CD4-positive, alpha-beta memory T cell (primary cell): ENCODE measurements at regions of chrX and their contacts with region 1.

Region 1: GRCh38 chrX:48539345-48540027 is at the start of gene TBC1D25:
- DNase-seq: peak; percentile 92 to 99 (median 97)
- H3K4me3 ChIP-seq: peak within 1 kb of the TSS; percentile 23 to 70
- H3K4me3 Mint-ChIP-seq: peak within 1 kb of the TSS; percentile 83 to 92 (median 88)
- H3K27ac ChIP-seq: peak within 1 kb of the TSS; percentile 95
- H3K27ac Mint-ChIP-seq: peak within 1 kb of the TSS; percentile 91 to 99 (median 96)
- H3K4me1 ChIP-seq: peaks cover 20% of the 10 kb centered on the region
- H3K4me1 Mint-ChIP-seq: peaks cover 13 to 24% (median 17%) of the 10 kb centered on the region in 4 donors
- H3K27me3 ChIP-seq: no peaks in the 10 kb centered on the region
- H3K27me3 Mint-ChIP-seq: no peaks in the 10 kb centered on the region
- total RNA-seq, gene TBC1D25: 22.8 to 24.5 TPM

Region 2: GRCh38 chrX:48083212-48083611 is 456.3 kb before region 1 on chrX:
- CTCF ChIA-PET with region 1: interaction called, 17 read pairs
- POLR2A ChIA-PET with region 1: interaction called, 9 read pairs
- intact Hi-C with region 1: loop called (anchors 1 kb)
- DNase-seq: peak in 4 of 5 donors; percentile 38 to 49 (median 40)
- H3K4me3 ChIP-seq: no peak overlapping the region
- H3K4me3 Mint-ChIP-seq: no peak overlapping the region
- H3K27ac ChIP-seq: no peak overlapping the region
- H3K27ac Mint-ChIP-seq: no peak overlapping the region
- H3K4me1 ChIP-seq: no peaks in the 10 kb centered on the region
- H3K4me1 Mint-ChIP-seq: no peaks in the 10 kb centered on the region
- H3K27me3 ChIP-seq: no peaks in the 10 kb centered on the region
- H3K27me3 Mint-ChIP-seq: no peaks in the 10 kb centered on the region

Region 3: DNA sequence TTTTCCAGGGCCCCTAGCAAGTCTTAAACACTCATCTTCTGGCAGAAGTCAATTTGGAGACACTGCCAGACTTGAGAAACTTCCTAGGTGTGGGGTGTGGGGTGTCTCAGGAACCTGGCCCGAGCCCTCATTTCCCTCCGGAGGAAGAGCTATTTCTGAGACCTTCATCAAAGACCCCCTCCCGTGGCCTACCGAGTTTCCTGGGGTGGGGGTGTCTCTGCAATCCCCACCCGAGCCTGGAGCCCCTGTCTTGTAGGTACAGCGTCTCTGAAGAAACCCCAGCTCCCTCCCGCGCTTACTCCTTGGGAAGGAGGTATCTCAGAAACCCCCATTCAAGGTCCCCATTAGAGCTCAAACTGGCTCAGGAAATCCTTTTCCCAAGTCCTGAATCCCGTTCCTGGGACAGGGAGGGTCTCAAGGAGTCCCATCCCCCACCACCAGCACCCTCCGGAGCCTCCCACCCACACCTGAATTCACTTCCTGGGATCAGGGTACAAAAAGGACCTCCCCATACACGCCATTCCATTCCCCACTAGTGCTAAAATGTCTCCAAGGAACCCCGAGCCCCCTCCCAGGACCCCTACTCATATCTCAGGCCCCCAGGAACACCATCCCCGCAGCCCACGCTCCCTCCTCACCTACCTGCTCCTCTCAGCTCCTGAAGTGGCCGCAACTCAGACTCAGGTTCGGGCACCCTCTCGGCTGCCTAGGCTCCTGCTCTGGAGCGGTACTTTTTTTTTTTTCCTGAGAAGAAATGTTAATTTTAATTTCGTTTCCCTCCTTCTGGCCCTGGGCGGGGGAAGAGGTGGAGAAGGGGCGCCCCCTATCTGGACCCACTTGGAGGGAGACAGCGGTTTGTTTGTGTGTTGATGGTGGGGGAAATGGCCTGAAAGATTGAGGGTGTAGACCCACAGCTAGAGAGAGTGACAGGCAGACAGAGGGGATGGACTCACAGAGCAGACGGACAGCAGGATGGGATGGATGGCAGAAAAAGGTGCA is 70.5 kb before region 1 on chrX:
- CTCF ChIA-PET with region 1: interaction called, 6 read pairs
- POLR2A ChIA-PET with region 1: interaction called, 20 read pairs
- intact Hi-C with region 1: no loop called
- DNase-seq: peak in 4 of 5 donors; percentile 27 to 42 (median 32)
- H3K4me3 ChIP-seq: peak overlapping the region; percentile 57 to 58
- H3K4me3 Mint-ChIP-seq: peak overlapping the region; percentile 82 to 95 (median 90)
- H3K27ac ChIP-seq: peak overlapping the region; percentile 72
- H3K27ac Mint-ChIP-seq: peak overlapping the region; percentile 62 to 95 (median 88)
- H3K4me1 ChIP-seq: peaks cover 12% of the 10 kb centered on the region
- H3K4me1 Mint-ChIP-seq: peaks cover 8 to 39% (median 22%) of the 10 kb centered on the region in 4 donors
- H3K27me3 ChIP-seq: no peaks in the 10 kb centered on the region
- H3K27me3 Mint-ChIP-seq: no peaks in the 10 kb centered on the region

Region 4: DNA sequence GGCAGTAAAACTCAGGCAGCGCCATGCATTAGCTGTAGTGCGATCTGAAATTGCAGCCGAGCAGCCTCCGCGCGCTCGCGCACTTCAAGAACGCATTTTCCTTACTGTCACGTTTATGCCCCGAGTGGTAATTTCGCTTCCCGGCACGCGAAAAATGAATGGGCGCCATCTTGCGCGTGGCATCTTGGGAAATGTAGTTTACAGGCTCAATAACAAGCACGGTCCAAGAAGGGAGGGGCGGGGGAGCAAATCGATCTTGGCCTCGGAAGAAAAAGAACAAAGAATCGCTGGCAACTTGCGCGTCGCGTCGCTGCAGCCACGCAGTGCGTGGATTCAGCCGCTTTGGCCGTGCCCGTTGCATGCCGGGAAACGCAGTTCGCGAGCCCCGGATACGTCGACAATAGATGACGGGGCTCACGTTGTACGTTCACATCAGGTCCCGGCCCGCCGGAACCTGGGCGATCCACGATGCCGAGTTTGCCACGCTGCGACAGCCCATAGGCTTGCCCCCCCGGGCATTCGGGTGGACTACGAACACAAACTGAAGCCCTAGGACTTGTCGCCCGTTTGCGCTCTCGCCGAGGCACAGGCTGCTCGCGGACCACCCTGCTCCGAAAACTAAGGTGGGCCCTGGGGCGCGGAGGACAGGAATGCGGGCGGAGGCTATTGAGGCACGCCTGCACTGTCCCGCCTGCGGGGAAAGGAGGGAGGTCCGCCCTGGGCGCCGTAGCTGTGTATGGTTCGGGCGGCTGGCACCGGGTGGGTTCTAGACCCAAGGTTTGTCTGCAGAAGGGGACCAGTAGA is 63.5 kb before region 1 on chrX and contains the start of gene FTSJ1:
- CTCF ChIA-PET with region 1: interaction called, 3 read pairs
- POLR2A ChIA-PET with region 1: interaction called, 20 read pairs
- intact Hi-C with region 1: loop called (anchors 1 kb)
- DNase-seq: peak; percentile 87 to 96 (median 92)
- H3K4me3 ChIP-seq: peak within 1 kb of the TSS; percentile 57 to 79
- H3K4me3 Mint-ChIP-seq: peak within 1 kb of the TSS; percentile 79 to 92 (median 90)
- H3K27ac ChIP-seq: peak within 1 kb of the TSS; percentile 80
- H3K27ac Mint-ChIP-seq: peak within 1 kb of the TSS; percentile 78 to 95 (median 92)
- H3K4me1 ChIP-seq: peaks cover 24% of the 10 kb centered on the region
- H3K4me1 Mint-ChIP-seq: peaks cover 16 to 24% (median 22%) of the 10 kb centered on the region in 4 donors
- H3K27me3 ChIP-seq: no peaks in the 10 kb centered on the region
- H3K27me3 Mint-ChIP-seq: no peaks in the 10 kb centered on the region
- total RNA-seq, gene FTSJ1: 48.1 to 54.1 TPM

Region 5: DNA sequence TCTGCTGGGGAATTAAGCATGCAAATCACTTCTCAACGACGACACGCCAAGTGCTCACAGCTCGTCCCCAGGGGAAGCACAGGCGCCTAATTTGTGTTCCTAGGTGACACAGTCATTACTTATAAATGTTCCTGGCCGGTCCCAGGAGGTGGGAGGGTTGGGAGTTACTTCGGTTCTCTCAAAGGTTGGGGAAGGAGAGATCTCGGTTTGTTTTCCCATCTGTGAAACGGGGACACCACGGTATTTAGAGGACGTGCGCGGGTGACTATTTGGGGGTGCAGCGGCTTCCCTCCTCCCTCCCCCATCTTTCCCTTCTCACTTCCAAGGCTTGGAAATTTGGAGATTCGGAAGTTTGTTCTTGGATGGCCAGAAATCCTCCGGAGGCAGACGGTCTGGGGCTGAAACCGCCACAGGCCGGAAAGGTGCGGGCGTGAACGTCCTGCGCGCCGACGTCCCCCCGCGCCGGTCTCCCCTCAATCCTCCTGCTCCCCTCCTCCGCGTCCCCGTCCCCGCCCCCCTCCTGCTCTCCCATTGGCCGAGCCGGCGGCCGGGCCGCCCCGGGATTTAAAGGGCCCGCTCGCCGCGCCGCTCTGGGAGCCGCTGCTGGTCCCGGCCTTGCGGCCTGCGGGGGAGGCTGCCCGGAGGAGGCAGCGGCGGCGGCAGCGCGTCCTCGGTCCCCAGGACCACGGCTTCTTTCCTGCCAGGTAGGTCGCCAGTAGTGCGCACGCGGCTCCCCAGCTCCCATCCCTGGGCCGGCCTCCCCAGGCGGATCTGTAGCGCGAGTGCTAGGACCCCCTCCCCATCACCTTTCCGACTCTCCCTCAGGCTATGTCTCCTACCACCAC is 30.9 kb before region 1 on chrX and contains the start of gene PORCN:
- CTCF ChIA-PET with region 1: no interaction called
- POLR2A ChIA-PET with region 1: interaction called, 14 read pairs
- intact Hi-C with region 1: no loop called
- DNase-seq: peak; percentile 62 to 78 (median 65)
- H3K4me3 ChIP-seq: peak within 1 kb of the TSS; percentile 61 to 64
- H3K4me3 Mint-ChIP-seq: peak within 1 kb of the TSS; percentile 87 to 91 (median 88)
- H3K27ac ChIP-seq: peak within 1 kb of the TSS; percentile 78
- H3K27ac Mint-ChIP-seq: peak within 1 kb of the TSS; percentile 70 to 96 (median 91)
- H3K4me1 ChIP-seq: peaks cover 16% of the 10 kb centered on the region
- H3K4me1 Mint-ChIP-seq: peaks cover 10 to 23% (median 12%) of the 10 kb centered on the region in 4 donors
- H3K27me3 ChIP-seq: no peaks in the 10 kb centered on the region
- H3K27me3 Mint-ChIP-seq: no peaks in the 10 kb centered on the region
- total RNA-seq, gene PORCN: 15.3 to 15.4 TPM

Region 6: DNA sequence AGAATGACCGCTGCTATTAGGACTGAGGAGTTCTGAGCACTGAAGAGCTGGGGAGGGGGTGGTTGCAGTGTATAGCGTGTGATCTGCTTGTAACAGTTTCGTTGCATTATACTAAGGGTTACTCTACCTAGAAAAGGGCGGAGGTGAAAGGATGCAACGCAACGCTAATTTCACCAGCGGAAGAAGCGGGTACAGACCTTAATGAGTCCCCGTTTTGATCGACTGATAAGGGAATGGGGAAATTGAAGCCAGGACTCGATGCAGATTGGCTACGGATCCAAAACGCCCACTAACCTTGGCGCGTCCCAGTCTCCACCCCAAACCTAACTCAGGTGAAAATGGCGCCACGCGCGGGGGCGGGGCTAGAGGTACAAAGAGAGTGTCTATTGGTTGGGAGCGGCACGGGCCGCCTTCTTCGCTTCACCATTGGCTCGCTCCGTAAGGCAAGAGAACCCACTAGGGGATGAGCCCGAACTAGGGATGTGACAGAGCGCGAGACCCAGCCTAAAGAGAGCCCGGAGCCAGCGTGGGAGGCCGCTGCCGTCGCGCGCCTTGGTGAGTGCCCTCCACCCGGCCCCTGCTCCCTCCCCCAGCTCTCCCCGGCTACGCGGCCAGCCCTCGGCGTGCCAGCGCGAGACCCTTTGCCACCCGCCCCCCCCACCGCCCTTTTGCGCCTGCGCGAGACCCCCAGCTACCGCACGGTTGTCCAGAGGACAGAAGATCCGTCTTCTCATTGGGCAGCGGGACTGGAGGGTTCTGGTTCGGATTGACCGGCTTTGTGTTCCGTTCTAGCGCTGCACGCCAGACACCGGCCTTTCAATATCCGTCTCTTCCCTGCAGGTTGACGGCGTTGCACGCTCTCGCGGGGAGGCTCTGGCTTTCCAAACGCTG is 17.9 kb before region 1 on chrX and contains the start of gene EBP:
- CTCF ChIA-PET with region 1: interaction called, 4 read pairs
- POLR2A ChIA-PET with region 1: interaction called, 46 read pairs
- intact Hi-C with region 1: loop called (anchors 1 kb)
- DNase-seq: peak; percentile 91 to 97 (median 95)
- H3K4me3 ChIP-seq: peak within 1 kb of the TSS; percentile 65 to 73
- H3K4me3 Mint-ChIP-seq: peak within 1 kb of the TSS; percentile 86 to 93 (median 90)
- H3K27ac ChIP-seq: peak within 1 kb of the TSS; percentile 63
- H3K27ac Mint-ChIP-seq: peak within 1 kb of the TSS; percentile 89 to 98 (median 97)
- H3K4me1 ChIP-seq: peaks cover 28% of the 10 kb centered on the region
- H3K4me1 Mint-ChIP-seq: peaks cover 16 to 40% (median 22%) of the 10 kb centered on the region in 4 donors
- H3K27me3 ChIP-seq: no peaks in the 10 kb centered on the region
- H3K27me3 Mint-ChIP-seq: no peaks in the 10 kb centered on the region
- total RNA-seq, gene EBP: 32.1 to 35.9 TPM

Region 7: GRCh38 chrX:48574270-48575266 is 35.1 kb after region 1 on chrX and contains the start of gene RBM3:
- CTCF ChIA-PET with region 1: interaction called, 9 read pairs
- POLR2A ChIA-PET with region 1: interaction called, 49 read pairs
- intact Hi-C with region 1: loop called (anchors 1 kb)
- DNase-seq: peak; percentile 90 to 97 (median 95)
- H3K4me3 ChIP-seq: peak within 1 kb of the TSS; percentile 42 to 81
- H3K4me3 Mint-ChIP-seq: peak within 1 kb of the TSS; percentile 89 to 99 (median 97)
- H3K27ac ChIP-seq: peak within 1 kb of the TSS; percentile 96
- H3K27ac Mint-ChIP-seq: peak within 1 kb of the TSS; percentile 97 to 100 (median 98)
- H3K4me1 ChIP-seq: peaks cover 17% of the 10 kb centered on the region
- H3K4me1 Mint-ChIP-seq: peaks cover 7 to 31% (median 18%) of the 10 kb centered on the region in 4 donors
- H3K27me3 ChIP-seq: no peaks in the 10 kb centered on the region
- H3K27me3 Mint-ChIP-seq: no peaks in the 10 kb centered on the region
- total RNA-seq, gene RBM3: 169 to 173 TPM

Region 8: DNA sequence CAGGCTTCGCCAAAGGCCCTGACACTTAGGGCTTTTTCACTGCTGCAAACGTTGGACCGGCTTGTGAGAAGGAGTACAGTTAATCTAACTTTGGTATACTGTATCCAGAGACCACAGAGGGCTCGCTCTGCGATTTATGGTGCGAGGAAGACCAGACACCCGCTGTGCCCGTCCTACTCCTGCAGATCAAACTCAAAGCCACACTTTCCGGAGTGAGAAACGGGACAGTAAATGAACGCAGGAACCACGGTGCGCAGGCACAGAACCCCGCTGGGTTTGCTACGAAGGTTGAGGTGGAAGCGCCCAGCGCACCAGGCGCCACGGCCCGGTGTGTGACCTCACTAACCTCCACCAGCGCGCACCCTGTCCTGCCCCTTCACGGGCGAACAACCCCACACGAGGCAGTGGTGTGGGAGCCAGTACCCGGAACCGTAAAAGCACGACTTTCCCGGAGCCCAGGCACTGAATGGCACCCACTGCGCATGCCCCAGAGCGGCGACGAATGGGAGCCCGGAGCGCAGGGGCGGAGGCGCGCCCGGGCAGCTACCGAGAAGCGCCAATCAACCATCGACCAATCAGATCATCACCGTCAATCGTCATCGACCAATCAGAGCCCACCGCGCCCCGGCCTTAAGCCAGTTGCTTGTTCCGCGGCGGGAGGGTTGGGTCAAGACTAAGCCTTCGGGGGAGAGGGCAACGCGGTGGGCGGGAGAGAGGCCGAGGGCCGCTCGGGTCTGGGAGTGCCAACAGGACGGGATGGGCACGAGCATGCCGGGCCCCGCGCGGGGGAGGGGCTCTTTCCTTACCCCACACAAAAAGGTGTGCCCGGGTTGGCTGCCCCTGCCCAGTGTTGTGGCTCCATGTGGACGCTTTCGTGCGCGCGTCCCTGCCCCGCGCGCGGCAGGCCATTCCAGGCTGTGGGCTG is 561.5 kb after region 1 on chrX:
- CTCF ChIA-PET with region 1: no interaction called
- POLR2A ChIA-PET with region 1: no interaction called
- intact Hi-C with region 1: no loop called
- DNase-seq: peak; percentile 88 to 91 (median 89)
- H3K4me3 ChIP-seq: peak overlapping the region; percentile 22 to 71
- H3K4me3 Mint-ChIP-seq: peak overlapping the region; percentile 87 to 92 (median 90)
- H3K27ac ChIP-seq: peak overlapping the region; percentile 76
- H3K27ac Mint-ChIP-seq: peak overlapping the region; percentile 93 to 97 (median 94)
- H3K4me1 ChIP-seq: peaks cover 6% of the 10 kb centered on the region
- H3K4me1 Mint-ChIP-seq: peaks cover 0 to 9% (median 4%) of the 10 kb centered on the region in 4 donors
- H3K27me3 ChIP-seq: no peaks in the 10 kb centered on the region
- H3K27me3 Mint-ChIP-seq: no peaks in the 10 kb centered on the region